ENCODE measurements at regions of chr2 and their contacts with region 1.

Region 1: GRCh38 chr2:187499941-187500532 is 52.0 kb upstream of the CALCRL start:
- DNase-seq: peak; percentile 45 to 81 (median 54)
- H3K4me3 ChIP-seq: no peak overlapping the region
- H3K27ac ChIP-seq: no peak overlapping the region
- H3K4me1 ChIP-seq: peaks cover 0 to 3% of the 10 kb centered on the region in 2 donors
- H3K27me3 ChIP-seq: no peaks in the 10 kb centered on the region
- CTCF ChIP-seq: peak; percentile 66 to 93 (median 84)
- POLR2A ChIP-seq: no peak

Region 2: DNA sequence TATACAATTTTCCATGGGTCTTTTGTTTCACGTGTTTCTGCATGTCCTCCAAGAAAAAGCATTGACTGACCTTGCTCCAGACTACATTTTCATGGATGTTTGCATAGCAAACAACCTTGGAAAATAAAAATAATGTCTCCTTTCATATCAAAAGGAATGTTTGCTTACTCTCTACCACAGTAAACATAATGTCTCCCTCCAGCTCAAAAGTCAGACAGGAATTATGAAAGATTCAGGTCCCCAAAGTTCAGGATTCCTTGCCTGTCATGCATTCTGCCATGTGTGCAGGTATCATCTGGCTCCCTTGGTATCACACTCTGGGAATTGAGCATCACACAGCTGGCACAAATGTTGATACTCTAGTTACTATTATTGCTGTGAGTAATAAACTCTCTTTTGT is 1117.1 kb before region 1 on chr2:
- intact Hi-C with region 1: no loop called
- DNase-seq: no peak
- H3K4me3 ChIP-seq: no peak overlapping the region
- H3K27ac ChIP-seq: no peak overlapping the region
- H3K4me1 ChIP-seq: peaks cover 0 to 5% of the 10 kb centered on the region in 2 donors
- H3K27me3 ChIP-seq: no peaks in the 10 kb centered on the region
- CTCF ChIP-seq: no peak
- POLR2A ChIP-seq: no peak

Region 3: DNA sequence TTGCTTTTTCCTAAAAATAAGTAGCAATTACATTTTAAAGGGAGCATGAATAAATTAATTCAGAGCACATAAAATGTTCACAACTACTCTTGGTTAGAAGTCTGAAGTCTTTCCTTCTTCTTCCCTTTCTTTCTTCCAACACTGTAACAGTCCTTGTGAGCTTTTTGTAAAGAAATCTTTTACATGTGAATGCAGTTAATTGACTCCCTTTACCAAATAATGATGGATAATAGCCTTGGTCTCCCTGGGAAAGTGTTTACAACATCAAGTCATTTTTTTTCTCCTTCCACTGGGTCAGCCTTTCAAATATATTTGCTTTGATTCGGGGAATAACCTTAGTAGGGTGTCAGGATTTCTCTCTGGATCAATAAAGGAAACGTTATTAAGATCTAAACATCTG is 91.1 kb before region 1 on chr2:
- intact Hi-C with region 1: no loop called
- DNase-seq: no peak
- H3K4me3 ChIP-seq: no peak overlapping the region
- H3K27ac ChIP-seq: no peak overlapping the region
- H3K4me1 ChIP-seq: no peaks in the 10 kb centered on the region
- H3K27me3 ChIP-seq: no peaks in the 10 kb centered on the region
- CTCF ChIP-seq: no peak
- POLR2A ChIP-seq: no peak

Region 4: GRCh38 chr2:187574969-187575750 is 75.1 kb after region 1 on chr2:
- intact Hi-C with region 1: loop called (anchors 5 kb)
- DNase-seq: no peak
- H3K4me3 ChIP-seq: peak overlapping the region in 1 of 4 donors; percentile 14
- H3K27ac ChIP-seq: no peak overlapping the region
- H3K4me1 ChIP-seq: no peaks in the 10 kb centered on the region
- H3K27me3 ChIP-seq: no peaks in the 10 kb centered on the region
- CTCF ChIP-seq: no peak
- POLR2A ChIP-seq: no peak

Region 5: DNA sequence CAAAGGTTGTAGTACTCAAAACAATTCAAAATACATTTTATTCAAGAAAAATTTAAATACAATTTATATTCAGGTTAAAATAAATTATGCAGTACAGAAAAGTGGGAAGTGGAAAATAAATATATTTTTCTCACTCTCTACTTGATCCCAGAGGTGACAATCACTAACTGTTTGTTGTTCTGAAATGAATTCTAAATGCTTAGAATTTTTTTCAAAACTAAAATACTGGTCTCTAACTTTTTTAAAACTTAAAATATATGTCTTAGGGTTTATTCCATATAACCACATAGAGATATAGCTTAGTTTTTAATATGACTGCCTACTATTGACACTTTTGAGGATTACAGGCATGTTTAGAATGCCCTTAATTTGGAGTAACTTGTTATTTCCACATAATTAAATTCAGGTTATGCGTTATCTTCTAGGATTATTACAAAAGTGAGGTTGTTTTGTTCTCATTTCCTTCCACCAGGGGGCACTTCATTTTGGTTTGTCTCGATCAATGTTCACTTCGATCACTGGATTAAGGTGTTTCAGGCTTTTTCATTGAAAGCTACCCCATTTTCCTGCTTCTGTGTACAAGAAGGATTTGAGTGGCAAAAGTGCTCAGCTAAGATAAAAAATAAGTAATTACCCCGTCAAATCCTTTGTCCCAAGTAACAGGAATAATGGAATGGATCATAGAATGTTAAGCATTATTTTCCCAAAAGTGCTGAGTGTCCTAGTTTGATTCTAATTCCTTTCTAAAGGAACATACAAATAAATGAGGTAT is 81.3 kb after region 1 on chr2:
- intact Hi-C with region 1: loop called (anchors 5 kb)
- DNase-seq: peak in 2 of 7 donors; percentile 24 to 28
- H3K4me3 ChIP-seq: peak overlapping the region in 1 of 4 donors; percentile 39
- H3K27ac ChIP-seq: no peak overlapping the region
- H3K4me1 ChIP-seq: no peaks in the 10 kb centered on the region
- H3K27me3 ChIP-seq: no peaks in the 10 kb centered on the region
- CTCF ChIP-seq: peak; percentile 62 to 74 (median 66)
- POLR2A ChIP-seq: no peak

Region 6: DNA sequence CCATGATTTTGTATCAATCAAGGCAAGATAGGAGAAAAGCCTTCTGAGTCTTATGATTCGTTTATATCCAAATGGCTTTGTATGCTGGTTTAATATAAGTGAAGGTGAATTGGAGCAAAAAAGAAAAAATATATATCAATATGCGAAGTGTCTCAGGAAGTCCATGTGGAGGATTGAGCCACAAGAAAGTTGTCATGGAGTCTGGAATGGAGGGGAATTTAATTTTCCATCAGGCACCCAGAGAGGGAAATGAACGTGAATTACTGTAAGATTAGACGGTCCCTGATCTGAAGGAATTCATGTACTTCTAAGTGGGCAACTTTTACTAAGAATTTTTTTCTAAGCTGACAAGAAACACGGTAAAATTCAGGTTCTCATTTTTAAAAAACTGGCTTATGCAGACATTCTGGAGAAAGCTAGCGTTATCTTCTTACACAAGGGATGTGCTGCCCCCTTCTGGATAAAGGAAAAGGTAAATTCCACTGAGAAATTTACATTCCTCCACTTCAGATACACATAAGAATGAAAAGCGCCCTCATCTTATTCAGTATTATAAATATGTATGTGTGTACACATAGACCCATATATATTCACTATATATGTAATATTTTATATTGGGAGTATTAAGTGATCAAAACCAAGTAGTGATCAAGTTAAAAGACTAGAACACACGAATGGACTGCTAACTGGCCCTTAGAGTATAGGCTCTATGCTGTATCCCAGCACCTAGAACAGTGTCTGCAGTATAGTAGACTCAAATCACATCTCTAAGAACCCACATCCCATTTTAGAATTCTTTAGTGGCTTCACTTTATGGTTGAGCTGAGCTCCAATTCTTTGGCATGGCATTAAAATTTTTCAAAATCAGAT is 343.2 kb after region 1 on chr2:
- intact Hi-C with region 1: loop called in 1 of 2 experiments (anchors 5 kb)
- DNase-seq: peak in 1 of 7 donors; percentile 5
- H3K4me3 ChIP-seq: no peak overlapping the region
- H3K27ac ChIP-seq: no peak overlapping the region
- H3K4me1 ChIP-seq: no peaks in the 10 kb centered on the region
- H3K27me3 ChIP-seq: no peaks in the 10 kb centered on the region
- CTCF ChIP-seq: peak; percentile 46 to 69 (median 56)
- POLR2A ChIP-seq: no peak

Measured in adrenal gland (tissue), 19 donors.